ENCODE measurements at regions of chr5 and their contacts with region 1.

Region 1: GRCh38 chr5:131796793-131797693 is at the start of gene FNIP1:
- DNase-seq: peak; percentile 95
- ATAC-seq: peak; percentile 93
- H3K4me3 ChIP-seq: peak within 1 kb of the TSS; percentile 90 to 96 (median 95)
- H3K27ac ChIP-seq: peak within 1 kb of the TSS; percentile 99
- H3K4me1 ChIP-seq: peaks cover 36% of the 10 kb centered on the region
- H3K27me3 ChIP-seq: no peaks in the 10 kb centered on the region; a peak in 1 of 5 replicates
- CTCF ChIP-seq: peak; percentile 31
- EP300 ChIP-seq: peak in 1 of 2 experiments; percentile 52; a peak in 1 of 4 replicates
- POLR2A ChIP-seq: peak; percentile 99
- RAD21 ChIP-seq: peak; percentile 26; the same call in 1 of the 2 replicates
- total RNA-seq, gene FNIP1: 29.3 and 39.7 TPM in 2 replicates

Region 2: GRCh38 chr5:131589510-131590348 is 207.3 kb before region 1 on chr5:
- CTCF ChIA-PET with region 1: no interaction called
- POLR2A ChIA-PET with region 1: interaction called, 4 read pairs
- in situ Hi-C with region 1: no loop called
- intact Hi-C with region 1: loop called (anchors 5 kb)
- DNase-seq: peak; percentile 60
- ATAC-seq: peak; percentile 86
- H3K4me3 ChIP-seq: no peak overlapping the region
- H3K27ac ChIP-seq: no peak overlapping the region
- H3K4me1 ChIP-seq: peaks cover 15% of the 10 kb centered on the region; the same call in 1 of the 2 replicates
- H3K27me3 ChIP-seq: no peaks in the 10 kb centered on the region
- CTCF ChIP-seq: peak; percentile 87
- EP300 ChIP-seq: no peak
- POLR2A ChIP-seq: no peak
- RAD21 ChIP-seq: peak; percentile 87

Region 3: DNA sequence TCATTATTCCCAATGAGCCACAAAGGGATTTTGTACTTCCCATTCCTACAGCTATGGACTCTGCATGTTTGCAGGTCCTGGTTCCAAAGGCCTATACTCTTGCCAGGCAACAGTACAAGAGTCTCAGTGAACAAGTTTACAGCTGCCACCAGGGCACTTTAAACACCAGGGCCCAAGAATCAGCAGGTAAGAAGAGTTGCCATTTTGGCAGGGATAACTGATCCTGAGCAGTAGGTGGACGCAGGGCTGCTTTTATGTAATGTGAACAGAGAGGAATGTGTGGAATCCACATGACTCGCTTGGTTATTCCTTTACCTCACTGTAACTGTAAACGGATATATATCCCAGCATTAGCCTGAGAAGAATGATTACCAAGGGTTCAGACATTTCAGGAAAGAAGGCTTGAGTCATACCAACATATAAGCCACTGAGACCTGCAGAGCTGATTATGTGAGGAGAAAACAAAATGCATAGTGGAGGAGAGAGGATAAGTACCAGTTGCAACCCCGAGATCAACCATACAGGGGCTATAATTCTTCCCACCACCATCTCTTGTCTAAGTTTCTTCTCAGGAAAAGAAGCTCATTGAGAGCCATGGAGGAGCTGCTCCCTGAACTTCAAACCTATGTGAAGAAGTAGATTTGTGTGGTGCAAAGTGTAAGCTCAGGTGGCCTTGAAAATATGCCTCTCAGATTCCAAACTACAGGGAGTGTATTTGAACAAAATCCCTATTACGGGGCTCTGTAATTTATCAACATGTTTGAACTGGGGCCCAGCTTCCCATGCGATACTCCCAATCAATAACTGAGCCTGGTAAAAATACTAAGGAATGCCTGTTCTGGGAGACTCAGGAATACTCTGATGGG is 186.6 kb before region 1 on chr5:
- CTCF ChIA-PET with region 1: no interaction called
- POLR2A ChIA-PET with region 1: interaction called, 11 read pairs
- in situ Hi-C with region 1: no loop called
- intact Hi-C with region 1: no loop called
- DNase-seq: peak; percentile 86
- ATAC-seq: peak; percentile 81
- H3K4me3 ChIP-seq: peak overlapping the region in 2 of 3 experiments; percentile 17 to 30; a peak in 3 of 6 replicates
- H3K27ac ChIP-seq: peak overlapping the region; percentile 94
- H3K4me1 ChIP-seq: peaks cover 73% of the 10 kb centered on the region
- H3K27me3 ChIP-seq: no peaks in the 10 kb centered on the region
- CTCF ChIP-seq: no peak
- EP300 ChIP-seq: peak in 1 of 2 experiments; percentile 85; a peak in 2 of 4 replicates
- POLR2A ChIP-seq: no peak
- RAD21 ChIP-seq: no peak

Region 4: GRCh38 chr5:131740477-131740876 is 56.6 kb before region 1 on chr5:
- CTCF ChIA-PET with region 1: no interaction called
- POLR2A ChIA-PET with region 1: interaction called, 3 read pairs
- in situ Hi-C with region 1: no loop called
- intact Hi-C with region 1: loop called (anchors 5 kb)
- DNase-seq: no peak
- ATAC-seq: no peak
- H3K4me3 ChIP-seq: no peak overlapping the region
- H3K27ac ChIP-seq: no peak overlapping the region
- H3K4me1 ChIP-seq: no peaks in the 10 kb centered on the region
- H3K27me3 ChIP-seq: no peaks in the 10 kb centered on the region
- CTCF ChIP-seq: no peak
- EP300 ChIP-seq: no peak
- POLR2A ChIP-seq: no peak
- RAD21 ChIP-seq: no peak

Region 5: GRCh38 chr5:131999441-132000240 is 202.6 kb after region 1 on chr5:
- CTCF ChIA-PET with region 1: no interaction called
- POLR2A ChIA-PET with region 1: interaction called, 91 read pairs
- in situ Hi-C with region 1: no loop called
- intact Hi-C with region 1: loop called (anchors 1 kb)
- DNase-seq: no peak
- ATAC-seq: no peak
- H3K4me3 ChIP-seq: peak overlapping the region in 1 of 3 experiments; percentile 20; a peak in 1 of 6 replicates
- H3K27ac ChIP-seq: peak overlapping the region; percentile 97
- H3K4me1 ChIP-seq: peaks cover 100% of the 10 kb centered on the region
- H3K27me3 ChIP-seq: no peaks in the 10 kb centered on the region
- CTCF ChIP-seq: no peak
- EP300 ChIP-seq: no peak
- POLR2A ChIP-seq: no peak
- RAD21 ChIP-seq: no peak; the same call in 1 of the 2 replicates